ENCODE measurements at regions of chr20 and their contacts with region 1.

Region 1: GRCh38 chr20:13717631-13718044 is 67.1 kb downstream of the ESF1 start:
- DNase-seq: no peak
- ATAC-seq: no peak
- H3K4me3 ChIP-seq: no peak overlapping the region
- H3K27ac ChIP-seq: no peak overlapping the region
- H3K4me1 ChIP-seq: no peaks in the 10 kb centered on the region
- H3K27me3 ChIP-seq: no peaks in the 10 kb centered on the region
- CTCF ChIP-seq: no peak

Region 2: DNA sequence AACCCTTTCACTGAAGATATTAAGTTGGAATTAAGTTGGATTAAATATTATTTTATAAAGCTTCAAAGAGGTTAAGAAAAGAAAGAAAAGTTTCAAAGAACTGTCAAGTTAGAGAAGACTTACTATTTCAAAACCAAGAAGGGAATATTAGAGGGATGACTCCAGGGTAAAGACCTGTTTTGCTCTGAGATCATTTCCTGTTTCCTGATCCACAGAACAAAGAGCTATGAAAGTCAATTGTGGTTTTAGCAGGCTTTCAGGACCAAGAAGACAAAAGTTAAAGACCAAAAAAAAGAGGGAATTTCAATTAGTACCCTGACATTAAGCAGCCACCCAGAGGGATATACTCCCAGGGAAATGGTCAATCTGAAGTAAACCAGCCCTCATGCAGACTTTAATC is 47.7 kb after region 1 on chr20:
- intact Hi-C with region 1: loop called in 1 of 2 experiments (anchors 10 kb)
- DNase-seq: no peak
- ATAC-seq: no peak
- H3K4me3 ChIP-seq: no peak overlapping the region
- H3K27ac ChIP-seq: no peak overlapping the region
- H3K4me1 ChIP-seq: no peaks in the 10 kb centered on the region
- H3K27me3 ChIP-seq: no peaks in the 10 kb centered on the region
- CTCF ChIP-seq: no peak

Region 3: GRCh38 chr20:13839421-13840092 is 121.9 kb after region 1 on chr20:
- intact Hi-C with region 1: no loop called
- DNase-seq: no peak
- ATAC-seq: peak in 1 of 4 donors; percentile 27
- H3K4me3 ChIP-seq: no peak overlapping the region
- H3K27ac ChIP-seq: no peak overlapping the region
- H3K4me1 ChIP-seq: no peaks in the 10 kb centered on the region
- H3K27me3 ChIP-seq: no peaks in the 10 kb centered on the region
- CTCF ChIP-seq: no peak

Measured in psoas muscle (tissue), 8 donors.